HepG2 (cell line): ENCODE measurements at regions of chr12 and their contacts with region 1.

Region 1: GRCh38 chr12:10190558-10191388 is 11.9 kb downstream of the TMEM52B start:
- DNase-seq: peak; percentile 40
- ATAC-seq: peak; percentile 98
- H3K4me3 ChIP-seq: no peak overlapping the region
- H3K27ac ChIP-seq: no peak overlapping the region
- H3K4me1 ChIP-seq: no peaks in the 10 kb centered on the region
- H3K27me3 ChIP-seq: no peaks in the 10 kb centered on the region; a peak in 2 of 5 replicates
- CTCF ChIP-seq: peak; percentile 80
- EP300 ChIP-seq: no peak
- POLR2A ChIP-seq: no peak
- RAD21 ChIP-seq: 0 out of 2 replicates have a peak, but pooled peaks have one; percentile 24

Region 2: DNA sequence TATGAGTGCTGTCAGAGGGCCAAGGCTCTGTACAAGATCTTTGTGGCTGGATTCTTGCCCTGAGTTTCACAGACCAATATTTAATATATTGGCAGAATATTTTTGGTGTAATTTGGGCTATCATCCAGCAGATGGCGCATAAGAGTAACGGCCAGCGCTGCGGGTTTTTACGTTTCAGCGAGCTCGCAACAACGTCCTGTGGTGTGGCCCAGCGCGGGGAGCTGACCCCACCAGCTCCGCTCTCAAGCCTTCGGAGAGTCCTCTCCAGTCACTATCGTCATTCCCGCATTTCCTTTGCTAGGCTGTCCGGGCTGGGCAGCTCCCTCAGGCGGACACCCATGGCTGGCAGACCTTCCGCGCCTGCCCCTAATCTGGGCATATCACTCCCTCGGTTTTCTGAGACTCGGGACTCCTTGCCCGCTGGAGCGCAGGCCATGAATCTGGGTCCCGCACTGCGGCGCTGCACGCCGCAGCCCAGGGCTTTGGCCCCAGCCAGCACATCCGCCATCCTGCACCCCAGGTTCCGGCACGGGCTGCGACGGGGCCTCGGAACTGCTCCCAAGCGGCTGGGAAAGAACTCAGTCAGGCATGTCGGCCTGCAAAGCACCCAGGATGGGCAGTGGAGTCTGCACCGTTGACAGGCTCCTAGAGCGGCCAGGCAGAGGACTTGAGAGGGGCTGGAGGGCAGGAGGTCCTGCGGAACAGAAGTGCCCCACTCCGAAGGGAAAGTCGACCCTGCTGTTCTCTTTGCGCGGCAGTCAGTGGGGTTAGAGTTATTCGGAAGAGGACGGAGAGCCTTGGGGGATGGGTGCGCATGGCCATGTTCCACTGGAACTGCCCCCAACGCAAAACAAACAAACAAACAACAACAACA is 37.3 kb before region 1 on chr12:
- CTCF ChIA-PET with region 1: interaction called, 19 read pairs
- POLR2A ChIA-PET with region 1: no interaction called
- in situ Hi-C with region 1: no loop called
- intact Hi-C with region 1: loop called (anchors 2 kb)
- DNase-seq: peak; percentile 16
- ATAC-seq: peak; percentile 84
- H3K4me3 ChIP-seq: peak overlapping the region in 2 of 3 experiments; percentile 22 to 56; a peak in 4 of 6 replicates
- H3K27ac ChIP-seq: no peak overlapping the region
- H3K4me1 ChIP-seq: no peaks in the 10 kb centered on the region
- H3K27me3 ChIP-seq: 0 out of 5 replicates have a peak, but pooled peaks cover 0 to 5% of the 10 kb centered on the region in 2 experiments
- CTCF ChIP-seq: peak; percentile 73
- EP300 ChIP-seq: no peak
- POLR2A ChIP-seq: no peak
- RAD21 ChIP-seq: 0 out of 2 replicates have a peak, but pooled peaks have one; percentile 45